CD4-positive, alpha-beta memory T cell (primary cell): ENCODE measurements at regions of chr21 and their contacts with region 1.

Region 1: GRCh38 chr21:42337830-42338728 is 12.7 kb downstream of the TFF2 start:
- DNase-seq: peak; percentile 74 to 81 (median 78)
- H3K4me3 ChIP-seq: no peak overlapping the region
- H3K4me3 Mint-ChIP-seq: peak overlapping the region in 3 of 8 donors; percentile 7 to 41 (median 38)
- H3K27ac ChIP-seq: no peak overlapping the region
- H3K27ac Mint-ChIP-seq: peak overlapping the region in 6 of 7 donors; percentile 18 to 82 (median 50)
- H3K4me1 ChIP-seq: peaks cover 10% of the 10 kb centered on the region
- H3K4me1 Mint-ChIP-seq: peaks cover 5 to 14% (median 8%) of the 10 kb centered on the region in 4 donors
- H3K27me3 ChIP-seq: no peaks in the 10 kb centered on the region
- H3K27me3 Mint-ChIP-seq: peaks cover 2 to 4% of the 10 kb centered on the region in 2 donors

Region 2: DNA sequence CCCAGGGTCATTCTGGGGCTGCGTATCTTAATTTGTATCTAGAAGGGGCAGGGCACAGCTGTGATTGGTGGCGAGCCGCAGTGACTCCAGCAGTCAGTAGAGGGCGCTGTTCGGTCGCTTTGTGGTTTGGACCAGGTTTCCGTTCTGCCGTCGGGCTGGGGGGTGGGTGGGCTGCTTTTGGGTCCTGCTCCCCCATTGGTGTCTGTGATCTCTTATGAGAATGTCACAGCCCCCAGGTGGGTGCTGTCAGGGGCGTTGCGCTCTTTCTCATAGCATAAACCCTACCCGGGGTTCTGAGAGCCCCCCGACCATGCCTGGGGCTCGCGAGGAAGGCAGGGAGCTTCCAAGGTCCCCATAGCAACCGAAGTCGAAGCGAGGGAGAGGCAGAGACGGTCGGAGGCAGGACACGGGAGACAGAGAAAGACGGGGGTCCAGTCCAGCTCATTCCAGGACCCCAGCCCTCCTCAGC is 28.3 kb before region 1 on chr21:
- CTCF ChIA-PET with region 1: interaction called, 12 read pairs
- POLR2A ChIA-PET with region 1: no interaction called
- intact Hi-C with region 1: no loop called
- DNase-seq: peak; percentile 49 to 61 (median 60)
- H3K4me3 ChIP-seq: no peak overlapping the region
- H3K4me3 Mint-ChIP-seq: no peak overlapping the region
- H3K27ac ChIP-seq: no peak overlapping the region
- H3K27ac Mint-ChIP-seq: peak overlapping the region in 3 of 7 donors; percentile 10 to 29 (median 24)
- H3K4me1 ChIP-seq: peaks cover 8% of the 10 kb centered on the region
- H3K4me1 Mint-ChIP-seq: peaks cover 0 to 8% (median 5%) of the 10 kb centered on the region in 4 donors
- H3K27me3 ChIP-seq: no peaks in the 10 kb centered on the region
- H3K27me3 Mint-ChIP-seq: peaks cover 0 to 9% of the 10 kb centered on the region in 2 donors

Region 3: DNA sequence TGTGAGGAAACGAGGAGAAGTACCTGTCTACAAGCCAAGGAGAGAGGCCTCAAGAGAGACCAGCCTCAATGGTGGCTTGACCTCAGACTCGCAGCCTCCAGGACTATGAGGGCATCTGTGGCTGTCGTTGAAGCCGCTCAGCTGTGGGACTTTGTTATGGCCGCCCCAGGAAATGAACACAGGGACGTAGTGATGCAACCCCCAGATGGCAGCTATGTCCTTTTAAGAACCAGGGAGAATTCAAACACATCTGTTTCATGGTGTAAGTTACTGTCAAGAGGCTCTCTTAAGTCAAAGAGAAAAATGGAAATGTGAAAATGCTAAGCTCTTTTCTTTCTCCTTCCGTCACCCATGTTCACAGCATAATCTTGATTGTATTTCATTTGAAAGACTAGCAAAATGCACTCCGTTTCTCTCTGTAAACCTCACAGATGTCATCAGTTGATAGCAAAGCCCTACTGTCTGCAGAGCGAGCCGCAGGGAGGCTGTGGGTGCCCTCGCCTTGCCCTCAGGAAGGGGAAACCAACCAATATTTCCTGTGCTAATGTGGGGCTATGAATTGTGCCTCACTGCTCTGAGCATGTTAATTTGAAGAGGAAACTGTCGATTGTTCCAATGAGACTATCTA is 86.9 kb after region 1 on chr21:
- CTCF ChIA-PET with region 1: interaction called, 13 read pairs
- POLR2A ChIA-PET with region 1: interaction called, 8 read pairs
- intact Hi-C with region 1: loop called (anchors 1 kb)
- DNase-seq: peak; percentile 87 to 92 (median 89)
- H3K4me3 ChIP-seq: peak overlapping the region; percentile 5 to 39
- H3K4me3 Mint-ChIP-seq: peak overlapping the region; percentile 57 to 91 (median 78)
- H3K27ac ChIP-seq: peak overlapping the region; percentile 71
- H3K27ac Mint-ChIP-seq: peak overlapping the region; percentile 67 to 96 (median 93)
- H3K4me1 ChIP-seq: peaks cover 84% of the 10 kb centered on the region
- H3K4me1 Mint-ChIP-seq: peaks cover 64 to 81% (median 74%) of the 10 kb centered on the region in 4 donors
- H3K27me3 ChIP-seq: no peaks in the 10 kb centered on the region
- H3K27me3 Mint-ChIP-seq: no peaks in the 10 kb centered on the region

Region 4: GRCh38 chr21:42440187-42440792 is 102.2 kb after region 1 on chr21:
- CTCF ChIA-PET with region 1: interaction called, 10 read pairs
- POLR2A ChIA-PET with region 1: interaction called, 3 read pairs
- intact Hi-C with region 1: no loop called
- DNase-seq: no peak
- H3K4me3 ChIP-seq: no peak overlapping the region
- H3K4me3 Mint-ChIP-seq: no peak overlapping the region
- H3K27ac ChIP-seq: no peak overlapping the region
- H3K27ac Mint-ChIP-seq: peak overlapping the region; percentile 60 to 93 (median 69)
- H3K4me1 ChIP-seq: peaks cover 26% of the 10 kb centered on the region
- H3K4me1 Mint-ChIP-seq: peaks cover 16 to 42% (median 30%) of the 10 kb centered on the region in 4 donors
- H3K27me3 ChIP-seq: no peaks in the 10 kb centered on the region
- H3K27me3 Mint-ChIP-seq: no peaks in the 10 kb centered on the region

Region 5: DNA sequence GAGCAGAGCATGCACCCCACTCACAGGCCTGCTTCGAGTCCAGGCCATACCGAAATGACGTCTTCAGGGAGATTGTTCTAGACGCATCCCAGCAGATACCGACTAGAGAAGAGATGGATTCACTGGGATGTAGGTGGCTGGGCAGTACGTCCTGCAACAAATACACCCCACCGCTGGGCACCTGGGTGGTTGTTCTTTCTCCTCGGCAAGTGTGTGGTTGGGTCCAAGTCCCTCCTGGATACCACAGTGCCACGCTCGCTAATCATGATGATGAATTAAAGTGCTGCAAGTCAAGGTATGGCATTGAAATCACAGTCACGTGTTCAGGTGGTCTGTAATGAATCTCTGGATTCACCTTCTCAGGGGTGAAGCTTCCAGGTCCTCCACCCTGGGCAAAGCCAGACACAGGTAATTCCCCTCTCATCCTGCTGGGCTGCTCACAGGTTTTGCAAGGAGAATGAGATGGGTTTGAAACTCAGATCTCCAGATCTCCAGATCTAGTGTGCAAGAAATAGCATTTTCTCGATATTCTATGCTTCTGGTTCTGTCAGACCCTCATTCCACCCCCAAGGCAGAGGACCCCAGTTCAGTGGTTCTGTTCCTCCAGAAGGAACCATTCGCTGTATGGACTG is 111.3 kb after region 1 on chr21:
- CTCF ChIA-PET with region 1: interaction called, 60 read pairs
- POLR2A ChIA-PET with region 1: interaction called, 5 read pairs
- intact Hi-C with region 1: loop called (anchors 1 kb)
- DNase-seq: no peak
- H3K4me3 ChIP-seq: no peak overlapping the region
- H3K4me3 Mint-ChIP-seq: no peak overlapping the region
- H3K27ac ChIP-seq: peak overlapping the region; percentile 3
- H3K27ac Mint-ChIP-seq: peak overlapping the region; percentile 88 to 97 (median 93)
- H3K4me1 ChIP-seq: peaks cover 17% of the 10 kb centered on the region
- H3K4me1 Mint-ChIP-seq: peaks cover 12 to 40% (median 25%) of the 10 kb centered on the region in 4 donors
- H3K27me3 ChIP-seq: no peaks in the 10 kb centered on the region
- H3K27me3 Mint-ChIP-seq: no peaks in the 10 kb centered on the region